ENCODE measurements at regions of chr20 and their contacts with region 1.

Region 1: DNA sequence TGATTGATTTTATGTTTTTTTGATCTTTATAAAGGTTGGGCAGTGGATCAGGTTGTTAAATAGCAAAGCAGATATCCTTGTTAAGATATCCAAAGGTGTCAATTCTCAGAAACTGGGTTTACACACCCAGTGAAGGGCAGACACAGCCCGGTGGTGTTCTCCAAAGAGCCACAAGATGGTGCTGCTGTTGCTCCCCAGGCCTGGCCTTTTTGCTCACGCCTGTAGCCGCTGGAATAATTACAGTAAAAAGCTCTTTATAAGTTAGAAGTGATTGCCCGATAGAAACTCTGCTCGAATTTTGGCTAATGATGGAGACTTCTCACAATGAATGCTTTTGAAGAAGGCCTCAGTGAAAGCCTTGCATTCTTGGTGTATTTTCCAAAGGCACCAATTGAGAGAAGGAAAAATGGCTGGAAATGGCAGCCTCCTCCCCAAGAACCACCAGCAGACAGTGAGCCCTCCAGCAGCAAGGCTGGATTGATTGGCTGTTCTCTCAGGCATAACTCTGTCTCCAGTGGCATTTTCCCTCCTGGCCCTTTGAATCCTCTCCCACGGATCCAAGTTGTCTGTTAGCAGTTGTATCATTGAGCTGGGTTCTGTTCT is 120.5 kb upstream of the CHD6 start:
- H3K4me3 ChIP-seq: no peak overlapping the region
- H3K27ac ChIP-seq: no peak overlapping the region
- H3K4me1 ChIP-seq: no peaks in the 10 kb centered on the region
- CTCF ChIP-seq: peak; percentile 61

Region 2: DNA sequence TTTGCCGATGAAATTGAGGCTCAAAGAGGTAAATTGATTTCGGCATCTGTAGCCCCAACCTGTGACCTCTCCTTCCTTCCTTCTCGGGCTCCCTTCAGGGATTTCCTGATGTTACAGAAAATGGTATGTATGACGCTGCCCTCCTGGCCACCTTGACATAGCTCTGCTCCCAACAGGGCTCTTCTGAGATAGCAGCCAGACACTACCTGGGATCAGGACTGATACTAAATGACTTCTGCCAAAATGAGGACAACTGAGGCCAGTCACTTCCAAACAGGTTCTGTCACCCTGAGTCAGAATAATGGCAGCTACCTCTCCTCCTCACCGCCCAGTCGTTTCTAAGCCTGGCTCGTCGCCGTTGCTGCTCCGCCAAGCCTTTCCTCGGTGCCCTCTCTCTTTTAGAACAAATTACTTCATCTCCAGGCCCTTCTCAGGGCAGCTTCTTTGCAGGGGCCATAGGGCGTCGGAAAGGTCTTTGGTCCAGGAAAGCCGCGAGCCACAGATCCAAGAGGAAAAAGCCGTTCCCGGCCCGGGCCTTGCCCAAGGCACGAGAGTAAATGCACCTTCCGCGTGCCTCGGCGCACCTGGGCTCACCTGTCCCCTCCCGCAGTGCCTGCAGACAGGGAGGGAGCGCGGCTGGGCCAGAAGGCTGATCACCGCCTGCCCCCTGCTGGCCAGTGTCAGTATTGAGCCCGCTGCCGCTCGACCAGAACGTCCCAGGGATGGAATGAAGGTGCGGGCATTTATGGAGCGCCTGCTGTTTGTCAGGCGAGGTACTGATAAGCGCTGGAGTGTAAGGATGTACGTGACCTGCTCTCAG is 399.0 kb before region 1 on chr20:
- CTCF ChIA-PET with region 1: no interaction called
- POLR2A ChIA-PET with region 1: no interaction called
- H3K4me3 ChIP-seq: peak overlapping the region; percentile 42
- H3K27ac ChIP-seq: no peak overlapping the region
- H3K4me1 ChIP-seq: no peaks in the 10 kb centered on the region; the same call in 1 of the 2 replicates
- CTCF ChIP-seq: peak; percentile 97

Region 3: DNA sequence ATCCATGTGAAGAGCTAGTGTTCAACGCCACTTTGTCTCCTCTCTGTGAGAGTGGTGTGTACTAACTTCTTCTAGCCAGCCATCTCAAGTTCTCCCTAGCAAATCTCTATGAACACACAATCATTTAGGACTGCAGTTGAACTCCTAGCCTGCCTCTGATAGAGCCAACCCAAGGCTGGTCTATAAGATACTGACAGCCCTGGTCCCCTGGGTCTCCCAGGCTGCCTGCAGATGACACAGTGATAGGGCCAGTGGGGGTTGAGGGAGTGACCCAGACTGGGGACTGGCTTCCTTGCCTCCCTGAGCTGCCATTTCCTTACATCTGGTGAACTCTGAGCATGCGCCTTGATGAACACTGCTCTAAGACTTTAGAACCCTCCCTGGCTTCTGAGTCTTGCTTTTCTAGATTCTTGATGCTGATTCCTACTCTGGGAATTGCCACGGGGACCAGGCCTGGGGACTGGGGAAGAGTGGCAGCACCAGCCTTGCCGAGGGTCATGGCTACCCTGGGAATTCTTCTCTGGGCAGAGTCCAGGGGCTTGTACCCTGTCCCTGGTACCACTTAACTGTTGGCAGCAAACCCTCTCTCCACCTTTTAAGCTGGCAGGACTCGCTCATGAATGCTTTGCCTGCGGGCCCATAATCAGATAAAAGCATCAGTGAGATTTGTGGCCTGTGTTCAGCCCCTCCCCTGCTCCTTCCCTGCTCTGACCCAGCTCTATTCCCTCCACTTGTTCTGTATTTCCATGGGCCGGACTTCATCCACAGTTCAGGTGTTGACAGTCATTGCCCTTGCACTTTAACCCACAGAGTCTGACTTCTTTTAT is 10.3 kb after region 1 on chr20:
- CTCF ChIA-PET with region 1: interaction called, 10 read pairs
- POLR2A ChIA-PET with region 1: no interaction called
- H3K4me3 ChIP-seq: no peak overlapping the region
- H3K27ac ChIP-seq: no peak overlapping the region
- H3K4me1 ChIP-seq: no peaks in the 10 kb centered on the region
- CTCF ChIP-seq: no peak

Region 4: GRCh38 chr20:43408848-43409576 is 1670.3 kb after region 1 on chr20:
- CTCF ChIA-PET with region 1: interaction called, 10 read pairs
- POLR2A ChIA-PET with region 1: no interaction called
- H3K4me3 ChIP-seq: no peak overlapping the region
- H3K27ac ChIP-seq: no peak overlapping the region
- H3K4me1 ChIP-seq: no peaks in the 10 kb centered on the region
- CTCF ChIP-seq: no peak

Measured in HEK293 (cell line).